BJ (cell line): ENCODE measurements at regions of chr1 and their contacts with region 1.

Region 1: DNA sequence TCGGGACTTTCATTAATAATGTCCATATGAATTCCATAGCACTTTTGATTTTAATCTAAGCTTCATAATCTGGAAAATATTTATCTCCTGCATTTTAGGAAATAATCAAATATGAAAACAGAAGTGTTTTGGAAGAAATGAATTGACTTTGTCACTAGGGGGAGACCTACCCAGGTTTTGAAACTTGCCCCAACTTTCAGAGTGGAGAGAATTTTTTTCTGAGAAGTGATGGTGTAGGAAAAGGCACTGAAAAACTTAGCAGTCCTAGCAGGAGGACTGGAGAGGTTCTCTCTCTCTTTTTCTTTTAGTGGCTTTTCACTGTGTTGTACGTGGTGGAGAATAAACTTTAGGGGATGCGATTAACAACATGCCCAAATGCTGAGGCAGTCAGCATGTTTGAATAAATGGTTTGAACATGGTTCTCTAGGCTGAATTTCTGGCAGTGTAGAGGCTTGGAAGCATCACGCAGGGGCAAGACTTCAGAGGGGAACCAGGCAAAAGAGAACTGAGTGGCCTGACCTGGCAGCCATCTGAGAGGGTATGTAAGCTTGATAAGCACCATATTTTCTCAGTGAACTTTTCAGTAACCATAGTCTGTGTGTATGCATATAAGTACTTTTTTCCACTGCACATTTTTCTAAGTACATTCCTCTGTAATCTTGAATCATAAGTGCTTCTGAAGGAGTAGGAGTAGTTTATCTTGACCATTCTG is 68.3 kb upstream of the NEK7 start:
- DNase-seq: no peak
- H3K4me3 ChIP-seq: peak overlapping the region; percentile 18
- H3K27me3 ChIP-seq: no peaks in the 10 kb centered on the region
- CTCF ChIP-seq: peak; percentile 68

Region 2: GRCh38 chr1:197994907-197995407 is 93.6 kb before region 1 on chr1:
- CTCF ChIA-PET with region 1: no interaction called
- POLR2A ChIA-PET with region 1: no interaction called
- DNase-seq: no peak
- H3K4me3 ChIP-seq: no peak overlapping the region
- H3K27me3 ChIP-seq: no peaks in the 10 kb centered on the region
- CTCF ChIP-seq: no peak

Region 3: GRCh38 chr1:198056255-198056654 is 32.3 kb before region 1 on chr1:
- CTCF ChIA-PET with region 1: no interaction called
- POLR2A ChIA-PET with region 1: no interaction called
- DNase-seq: no peak
- H3K4me3 ChIP-seq: no peak overlapping the region
- H3K27me3 ChIP-seq: no peaks in the 10 kb centered on the region
- CTCF ChIP-seq: 0 out of 2 replicates have a peak, but pooled peaks have one; percentile 15

Region 4: DNA sequence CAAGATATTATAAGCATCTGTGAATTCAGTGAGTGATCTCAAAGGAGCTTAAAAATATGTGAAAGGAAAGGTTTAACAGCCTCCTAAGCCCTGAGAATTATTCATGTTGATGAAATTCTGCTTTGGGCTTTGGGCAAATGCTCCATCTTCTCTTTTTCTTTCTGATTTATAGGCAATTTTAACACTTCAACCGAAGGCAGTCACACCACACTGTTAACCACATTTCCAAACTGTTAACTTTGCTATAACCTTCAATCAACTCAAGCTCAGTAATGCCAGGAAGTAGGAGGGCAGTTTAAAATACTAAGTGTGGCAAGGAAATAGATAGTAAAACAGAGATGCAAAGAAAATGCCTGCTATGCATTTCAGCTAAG is 13.9 kb after region 1 on chr1:
- CTCF ChIA-PET with region 1: interaction called, 4 read pairs
- POLR2A ChIA-PET with region 1: interaction called, 10 read pairs
- DNase-seq: no peak
- H3K4me3 ChIP-seq: no peak overlapping the region
- H3K27me3 ChIP-seq: no peaks in the 10 kb centered on the region
- CTCF ChIP-seq: no peak